Activated CD4-positive, alpha-beta memory T cell treated with anti-CD3 and anti-CD28 coated beads for 36 hours (primary cell): ENCODE measurements at regions of chr4 and their contacts with region 1.

Region 1: DNA sequence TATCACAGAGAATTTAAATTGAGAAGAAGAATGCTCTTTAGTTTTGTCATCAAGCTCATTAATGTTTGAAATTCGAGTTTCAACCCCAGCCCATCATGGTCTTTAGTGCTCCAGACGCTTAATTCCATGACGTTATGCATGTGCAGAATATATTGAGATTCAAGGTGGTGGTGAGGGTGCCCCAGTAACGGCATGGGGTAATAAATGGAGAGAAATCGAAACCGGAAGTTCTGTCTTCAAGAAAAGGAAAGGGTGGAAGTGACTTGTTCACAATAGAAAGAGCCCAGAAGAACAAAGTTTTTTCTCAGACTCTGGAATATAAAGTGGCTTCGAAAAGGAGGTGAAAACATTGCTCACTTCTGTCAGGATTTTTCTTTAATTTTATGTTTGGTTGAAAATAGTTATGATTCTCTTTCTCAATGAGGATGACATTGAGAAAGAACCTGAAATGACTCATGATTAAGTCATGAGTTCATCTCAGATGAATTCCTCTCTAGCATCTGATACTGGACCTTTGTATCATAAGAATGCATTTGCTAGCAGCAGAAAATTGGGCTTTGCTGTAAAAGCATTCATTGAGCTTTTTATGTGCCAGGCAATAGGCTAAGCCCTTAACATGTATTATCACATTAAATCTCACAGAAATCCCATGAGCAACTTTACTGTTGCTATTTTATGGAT is 779 bp upstream of the DDX60L start:
- DNase-seq: peak; percentile 53
- H3K4me3 Mint-ChIP-seq: peak overlapping the region; percentile 85
- H3K27ac Mint-ChIP-seq: peak overlapping the region; percentile 88
- H3K4me1 Mint-ChIP-seq: peaks cover 51% of the 10 kb centered on the region
- H3K27me3 Mint-ChIP-seq: no peaks in the 10 kb centered on the region

Region 2: GRCh38 chr4:168264903-168265302 is 216.2 kb before region 1 on chr4:
- CTCF ChIA-PET with region 1: no interaction called
- POLR2A ChIA-PET with region 1: no interaction called
- intact Hi-C with region 1: no loop called
- DNase-seq: no peak
- H3K4me3 Mint-ChIP-seq: no peak overlapping the region
- H3K27ac Mint-ChIP-seq: no peak overlapping the region
- H3K4me1 Mint-ChIP-seq: no peaks in the 10 kb centered on the region
- H3K27me3 Mint-ChIP-seq: no peaks in the 10 kb centered on the region

Region 3: DNA sequence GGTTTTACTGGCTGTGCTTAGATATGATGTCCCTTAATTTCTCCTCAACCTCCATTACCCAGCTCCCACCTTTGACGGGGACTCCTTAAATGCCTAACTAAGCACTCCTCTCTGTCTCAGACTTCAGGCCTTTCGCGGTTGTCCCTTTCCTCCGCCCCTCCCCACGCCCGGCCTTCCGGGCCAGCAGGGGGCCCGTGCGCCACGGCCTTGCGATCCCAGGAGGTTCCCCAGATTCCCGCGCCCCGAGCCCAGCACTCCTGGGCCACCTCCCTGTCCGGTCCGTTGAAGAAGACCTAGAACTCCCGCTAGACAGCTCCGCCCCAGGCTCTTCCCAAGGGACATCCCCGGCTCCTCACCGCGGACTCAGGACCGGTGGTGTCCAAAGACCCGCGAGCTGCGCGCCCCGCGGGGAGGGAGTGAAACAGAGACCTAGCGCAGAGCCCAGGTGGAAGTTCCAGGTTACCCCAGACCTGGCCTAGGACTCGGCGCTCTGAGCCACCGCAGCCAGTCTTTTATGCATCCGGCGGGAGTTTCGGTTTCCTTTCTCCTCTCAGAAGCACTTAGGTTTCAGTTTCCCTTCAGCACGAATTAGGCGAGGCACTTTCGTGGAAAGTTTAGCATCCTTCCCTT is 162.7 kb before region 1 on chr4 and contains the start of gene DDX60:
- CTCF ChIA-PET with region 1: no interaction called
- POLR2A ChIA-PET with region 1: interaction called, 3 read pairs
- intact Hi-C with region 1: loop called (anchors 1 kb)
- DNase-seq: peak; percentile 89
- H3K4me3 Mint-ChIP-seq: peak within 1 kb of the TSS; percentile 84
- H3K27ac Mint-ChIP-seq: peak within 1 kb of the TSS; percentile 88
- H3K4me1 Mint-ChIP-seq: peaks cover 32% of the 10 kb centered on the region
- H3K27me3 Mint-ChIP-seq: no peaks in the 10 kb centered on the region
- total RNA-seq, gene DDX60: 24.1 to 28.9 TPM

Region 4: GRCh38 chr4:168451744-168452390 is 29.2 kb before region 1 on chr4:
- CTCF ChIA-PET with region 1: no interaction called
- POLR2A ChIA-PET with region 1: interaction called, 3 read pairs
- intact Hi-C with region 1: loop called (anchors 1 kb)
- DNase-seq: no peak
- H3K4me3 Mint-ChIP-seq: no peak overlapping the region
- H3K27ac Mint-ChIP-seq: peak overlapping the region; percentile 61
- H3K4me1 Mint-ChIP-seq: peaks cover 30% of the 10 kb centered on the region
- H3K27me3 Mint-ChIP-seq: no peaks in the 10 kb centered on the region

Region 5: DNA sequence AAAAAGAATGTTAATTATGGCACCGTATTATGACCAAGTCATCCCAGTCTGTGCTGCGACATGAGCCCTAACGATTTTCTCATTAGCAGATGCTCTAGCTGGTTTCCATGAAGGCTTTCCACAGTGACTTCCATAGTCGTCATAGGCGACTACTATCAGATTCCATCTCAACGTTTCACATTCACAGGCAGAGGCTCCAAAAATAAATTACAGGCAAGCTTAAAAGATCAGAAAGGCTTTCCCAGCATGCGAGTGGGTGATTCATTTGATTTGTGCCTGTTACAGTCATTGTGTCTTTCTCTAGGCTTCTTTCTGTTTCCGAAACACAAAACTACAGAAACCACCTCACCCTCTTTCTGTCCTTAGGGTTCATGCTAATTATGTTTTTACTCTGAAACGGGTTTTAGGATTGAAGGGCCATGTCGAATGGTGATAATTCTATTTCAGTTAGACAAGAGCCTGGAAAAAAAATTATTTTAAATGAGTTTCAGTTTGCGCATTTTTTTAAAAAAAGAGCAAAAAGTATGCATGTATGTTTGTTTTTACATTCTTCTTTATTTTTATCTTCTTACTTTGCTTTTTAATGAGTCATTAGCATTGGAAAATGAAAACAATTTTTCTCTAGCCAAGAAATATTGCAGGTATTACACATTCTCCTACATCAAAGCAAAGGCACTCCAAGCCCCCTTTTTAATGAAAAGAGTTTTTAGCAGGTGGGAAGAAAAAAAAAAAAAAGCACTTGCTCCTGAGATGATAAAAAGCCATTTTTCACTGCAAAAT is 59.2 kb after region 1 on chr4:
- CTCF ChIA-PET with region 1: no interaction called
- POLR2A ChIA-PET with region 1: no interaction called
- intact Hi-C with region 1: loop called (anchors 2 kb)
- DNase-seq: peak; percentile 30
- H3K4me3 Mint-ChIP-seq: no peak overlapping the region
- H3K27ac Mint-ChIP-seq: peak overlapping the region; percentile 26
- H3K4me1 Mint-ChIP-seq: peaks cover 6% of the 10 kb centered on the region
- H3K27me3 Mint-ChIP-seq: peaks cover 2% of the 10 kb centered on the region

Region 6: DNA sequence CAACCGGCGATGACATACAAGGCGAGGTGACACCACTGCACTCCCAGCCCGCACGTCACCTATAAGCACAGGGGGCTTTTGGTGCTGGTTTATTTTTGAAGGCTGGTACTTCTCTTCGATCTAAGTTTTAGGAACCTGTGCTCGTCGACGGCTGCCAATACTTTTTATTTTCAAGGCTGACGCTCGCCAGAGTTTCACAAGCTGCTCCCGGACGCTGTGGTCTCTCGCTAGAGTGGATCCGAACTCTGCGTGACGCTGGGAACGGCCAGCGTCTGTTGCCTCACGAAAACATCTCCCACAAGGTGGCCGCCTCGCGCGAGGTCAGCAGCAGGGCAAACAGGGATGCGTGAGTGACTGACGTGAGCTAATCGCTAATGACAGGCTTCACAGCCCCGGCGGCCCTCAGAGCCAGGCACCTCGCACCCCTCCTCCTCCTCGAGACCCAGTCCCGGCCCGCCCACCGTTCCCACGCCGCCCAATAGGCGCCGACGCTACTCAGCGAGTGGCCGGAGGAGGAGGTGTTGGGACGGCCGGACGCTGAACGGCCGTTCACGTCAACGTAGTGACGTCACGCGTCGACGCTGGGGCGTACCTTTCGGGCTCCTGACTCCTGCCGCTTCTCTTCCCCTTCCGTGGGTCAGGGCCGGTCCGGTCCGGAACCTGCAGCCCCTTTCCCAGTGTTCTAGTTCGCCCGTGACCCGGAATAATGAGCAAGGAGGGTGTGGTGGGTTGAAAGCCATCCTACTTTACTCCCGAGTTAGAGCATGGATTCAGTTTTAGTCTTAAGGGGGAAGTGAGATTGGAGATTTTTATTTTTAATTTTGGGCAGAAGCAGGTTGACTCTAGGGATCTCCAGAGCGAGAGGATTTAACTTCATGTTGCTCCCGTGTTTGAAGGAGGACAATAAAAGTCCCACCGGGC is 1139.1 kb after region 1 on chr4 and contains the start of gene CLCN3:
- CTCF ChIA-PET with region 1: no interaction called
- POLR2A ChIA-PET with region 1: interaction called, 3 read pairs
- intact Hi-C with region 1: loop called (anchors 10 kb)
- DNase-seq: peak; percentile 94
- H3K4me3 Mint-ChIP-seq: peak within 1 kb of the TSS; percentile 96
- H3K27ac Mint-ChIP-seq: peak within 1 kb of the TSS; percentile 98
- H3K4me1 Mint-ChIP-seq: peaks cover 60% of the 10 kb centered on the region
- H3K27me3 Mint-ChIP-seq: no peaks in the 10 kb centered on the region
- total RNA-seq, gene CLCN3: 17.3 to 18.6 TPM